ENCODE measurements at regions of chr1 and their contacts with region 1.

Region 1: GRCh38 chr1:225467193-225468020 is 39.6 kb upstream of the LBR start:
- DNase-seq: peak; percentile 57 to 85 (median 81)
- ATAC-seq: peak; percentile 91
- H3K4me3 ChIP-seq: peak overlapping the region; percentile 94
- H3K4me3 Mint-ChIP-seq: peak overlapping the region; percentile 81 to 94 (median 92)
- H3K27ac ChIP-seq: peak overlapping the region; percentile 85
- H3K27ac Mint-ChIP-seq: peak overlapping the region; percentile 89 to 98 (median 98)
- H3K4me1 ChIP-seq: peaks cover 22 to 40% of the 10 kb centered on the region in 2 donors
- H3K4me1 Mint-ChIP-seq: peaks cover 33 to 65% (median 48%) of the 10 kb centered on the region in 7 donors
- H3K27me3 ChIP-seq: no peaks in the 10 kb centered on the region
- H3K27me3 Mint-ChIP-seq: no peaks in the 10 kb centered on the region

Region 2: DNA sequence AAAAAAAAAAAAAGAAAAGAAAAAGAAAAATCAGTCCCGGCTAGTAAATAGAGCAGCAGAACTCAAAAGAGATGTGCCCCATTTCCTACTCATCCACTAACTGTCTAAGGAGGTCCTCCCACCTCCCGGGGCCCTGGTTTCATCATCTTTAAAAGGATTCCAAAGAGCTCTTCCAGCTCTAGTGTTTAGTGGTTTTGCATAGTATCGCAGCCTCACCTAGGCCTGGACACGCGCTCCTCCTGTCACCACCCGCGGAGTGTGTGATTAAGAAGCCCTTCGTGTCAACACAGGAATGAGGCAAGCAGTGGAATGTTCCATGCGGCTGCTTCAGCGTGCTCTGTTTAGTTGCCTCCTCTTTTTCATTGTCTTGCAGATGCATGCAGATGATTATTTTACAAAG is 88.5 kb before region 1 on chr1:
- CTCF ChIA-PET with region 1: no interaction called
- POLR2A ChIA-PET with region 1: no interaction called
- intact Hi-C with region 1: no loop called
- DNase-seq: no peak
- ATAC-seq: no peak
- H3K4me3 ChIP-seq: no peak overlapping the region
- H3K4me3 Mint-ChIP-seq: no peak overlapping the region
- H3K27ac ChIP-seq: no peak overlapping the region
- H3K27ac Mint-ChIP-seq: no peak overlapping the region
- H3K4me1 ChIP-seq: no peaks in the 10 kb centered on the region
- H3K4me1 Mint-ChIP-seq: peaks cover 0 to 6% (median 0%) of the 10 kb centered on the region in 7 donors
- H3K27me3 ChIP-seq: no peaks in the 10 kb centered on the region
- H3K27me3 Mint-ChIP-seq: no peaks in the 10 kb centered on the region

Region 3: GRCh38 chr1:225754940-225755641 is 287.7 kb after region 1 on chr1:
- CTCF ChIA-PET with region 1: no interaction called
- POLR2A ChIA-PET with region 1: no interaction called
- intact Hi-C with region 1: no loop called
- DNase-seq: no peak
- ATAC-seq: no peak
- H3K4me3 ChIP-seq: no peak overlapping the region
- H3K4me3 Mint-ChIP-seq: no peak overlapping the region
- H3K27ac ChIP-seq: no peak overlapping the region
- H3K27ac Mint-ChIP-seq: no peak overlapping the region
- H3K4me1 ChIP-seq: no peaks in the 10 kb centered on the region
- H3K4me1 Mint-ChIP-seq: peaks cover 0 to 9% (median 0%) of the 10 kb centered on the region in 7 donors
- H3K27me3 ChIP-seq: no peaks in the 10 kb centered on the region
- H3K27me3 Mint-ChIP-seq: peaks cover 0 to 9% (median 0%) of the 10 kb centered on the region in 5 donors

Region 4: GRCh38 chr1:225923692-225924555 is 456.5 kb after region 1 on chr1 and contains the start of gene PYCR2:
- CTCF ChIA-PET with region 1: interaction called, 3 read pairs
- POLR2A ChIA-PET with region 1: interaction called, 23 read pairs
- intact Hi-C with region 1: loop called (anchors 1 kb)
- DNase-seq: peak; percentile 92 to 97 (median 94)
- ATAC-seq: peak; percentile 99
- H3K4me3 ChIP-seq: peak within 1 kb of the TSS; percentile 100
- H3K4me3 Mint-ChIP-seq: peak within 1 kb of the TSS; percentile 86 to 98 (median 94)
- H3K27ac ChIP-seq: peak within 1 kb of the TSS; percentile 95
- H3K27ac Mint-ChIP-seq: peak within 1 kb of the TSS; percentile 90 to 98 (median 95)
- H3K4me1 ChIP-seq: peaks cover 11 to 65% of the 10 kb centered on the region in 2 donors
- H3K4me1 Mint-ChIP-seq: peaks cover 45 to 75% (median 60%) of the 10 kb centered on the region in 7 donors
- H3K27me3 ChIP-seq: no peaks in the 10 kb centered on the region
- H3K27me3 Mint-ChIP-seq: no peaks in the 10 kb centered on the region
- total RNA-seq, gene PYCR2: 46.4 to 137 (median 109) TPM

Measured in naive thymus-derived CD4-positive, alpha-beta T cell (primary cell).